ENCODE measurements at regions of chr12 and their contacts with region 1.

Region 1: GRCh38 chr12:95998611-95999286 is 2.6 kb upstream of the HAL start:
- DNase-seq: peak; percentile 67
- ATAC-seq: peak; percentile 97
- H3K4me3 Mint-ChIP-seq: no peak overlapping the region
- H3K27ac Mint-ChIP-seq: no peak overlapping the region
- H3K4me1 Mint-ChIP-seq: peaks cover 3% of the 10 kb centered on the region
- H3K27me3 Mint-ChIP-seq: no peaks in the 10 kb centered on the region
- CTCF ChIP-seq: peak; percentile 71

Region 2: DNA sequence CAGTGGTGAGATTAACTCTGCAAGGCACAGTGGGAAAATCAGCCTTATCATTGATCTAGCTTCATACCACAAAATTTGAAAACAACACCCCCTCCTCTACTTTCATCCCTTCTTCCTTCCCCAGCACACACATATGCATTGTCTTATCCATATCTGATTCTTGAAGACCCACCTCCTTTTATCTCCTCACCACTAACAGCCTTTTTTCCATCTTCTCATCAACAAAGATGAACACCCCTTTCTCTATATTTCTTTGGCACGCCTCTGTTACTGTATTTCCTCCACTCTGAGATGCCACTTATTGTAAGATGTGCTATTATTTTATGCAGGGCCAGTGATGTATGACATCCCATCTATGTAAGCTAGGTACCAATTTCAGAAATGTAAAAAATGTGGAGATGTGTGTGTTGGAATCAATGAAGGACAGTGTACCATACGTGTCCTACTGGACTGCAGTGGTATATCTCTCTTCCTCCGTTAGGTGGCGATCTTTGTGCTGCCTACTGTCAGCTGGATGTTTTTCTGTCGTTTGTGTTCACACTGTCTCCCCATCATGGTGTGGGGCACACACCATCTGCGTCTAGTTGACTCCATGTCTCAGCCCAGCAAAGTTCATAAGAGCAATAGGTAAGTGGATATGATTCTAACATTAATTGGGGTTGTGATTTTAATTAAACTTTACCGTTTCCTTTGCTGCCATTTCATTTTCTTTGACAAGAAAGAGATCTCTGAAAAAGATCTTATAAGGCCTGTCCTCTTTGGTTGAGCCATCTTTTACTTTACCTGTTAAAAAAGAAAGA is 80.4 kb before region 1 on chr12:
- CTCF ChIA-PET with region 1: interaction called, 85 read pairs
- POLR2A ChIA-PET with region 1: interaction called, 4 read pairs
- intact Hi-C with region 1: loop called (anchors 2 kb)
- DNase-seq: peak; percentile 62
- ATAC-seq: peak; percentile 99
- H3K4me3 Mint-ChIP-seq: no peak overlapping the region
- H3K27ac Mint-ChIP-seq: no peak overlapping the region
- H3K4me1 Mint-ChIP-seq: no peaks in the 10 kb centered on the region
- H3K27me3 Mint-ChIP-seq: peaks cover 2% of the 10 kb centered on the region
- CTCF ChIP-seq: peak; percentile 95

Region 3: DNA sequence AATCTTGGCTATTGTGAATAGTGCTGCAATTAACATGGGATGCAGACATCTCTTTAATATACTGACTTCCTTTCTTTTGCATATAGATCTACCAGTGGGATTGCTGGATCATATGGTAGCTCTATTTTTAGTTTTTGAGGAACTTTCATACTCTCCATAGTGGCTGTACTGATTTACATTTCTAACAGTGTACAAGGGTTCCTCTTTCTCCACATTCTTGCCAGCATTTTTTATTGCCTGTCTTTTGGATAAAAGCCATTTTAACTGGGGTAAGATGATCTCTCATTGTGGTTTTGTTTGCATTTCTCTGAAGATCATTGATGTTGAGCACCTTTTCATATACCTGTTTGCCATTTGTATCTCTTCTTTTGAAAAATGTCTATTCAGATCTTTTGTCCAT is 47.2 kb before region 1 on chr12:
- CTCF ChIA-PET with region 1: interaction called, 13 read pairs
- POLR2A ChIA-PET with region 1: no interaction called
- intact Hi-C with region 1: no loop called
- DNase-seq: no peak
- ATAC-seq: no peak
- H3K4me3 Mint-ChIP-seq: no peak overlapping the region
- H3K27ac Mint-ChIP-seq: no peak overlapping the region
- H3K4me1 Mint-ChIP-seq: no peaks in the 10 kb centered on the region
- H3K27me3 Mint-ChIP-seq: peaks cover 5% of the 10 kb centered on the region
- CTCF ChIP-seq: no peak

Region 4: DNA sequence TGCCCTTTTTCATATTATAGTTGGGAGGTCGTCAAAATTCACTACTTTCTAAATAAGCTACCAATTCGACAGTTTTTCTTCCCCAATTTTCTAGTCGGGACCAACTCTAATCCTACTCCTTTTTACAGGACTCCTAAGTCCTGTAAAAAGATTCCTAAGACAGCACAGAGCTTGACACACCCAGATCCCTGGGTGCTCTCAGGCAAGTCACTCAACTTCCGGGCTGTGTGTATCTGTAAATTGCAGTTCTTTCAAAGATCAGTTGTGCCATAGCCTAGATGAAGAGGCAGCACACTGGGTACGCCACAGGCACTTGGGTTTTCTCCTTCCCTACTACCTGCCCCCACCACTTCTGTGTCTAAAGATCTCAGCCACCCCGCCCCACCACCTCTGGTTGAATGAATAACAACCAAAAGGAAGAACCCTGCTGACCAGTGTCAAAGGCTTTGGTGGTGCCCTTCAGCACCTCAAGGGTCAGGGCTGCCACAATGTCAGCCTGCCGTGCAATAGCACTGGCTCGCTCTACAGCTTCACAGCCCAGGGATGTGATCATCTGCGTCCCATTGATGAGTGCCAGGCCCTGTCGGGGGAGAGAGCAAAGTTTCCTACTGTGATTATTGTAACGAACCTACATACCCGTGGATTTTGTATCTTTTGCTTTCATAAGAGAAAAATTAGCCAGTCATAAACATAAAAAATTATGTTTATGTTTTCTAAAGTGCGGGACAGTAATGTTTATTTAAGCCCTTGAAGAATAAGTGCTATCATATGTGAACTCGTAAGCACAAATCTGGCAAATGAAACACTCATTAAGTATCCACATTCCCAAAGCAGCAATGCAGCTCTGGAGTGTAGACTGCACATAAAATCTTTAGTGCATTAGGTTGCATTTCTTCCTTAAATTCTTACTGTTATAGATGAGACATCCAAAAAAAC is 11.8 kb before region 1 on chr12:
- CTCF ChIA-PET with region 1: interaction called, 27 read pairs
- POLR2A ChIA-PET with region 1: interaction called, 4 read pairs
- intact Hi-C with region 1: no loop called
- DNase-seq: no peak
- ATAC-seq: no peak
- H3K4me3 Mint-ChIP-seq: no peak overlapping the region
- H3K27ac Mint-ChIP-seq: no peak overlapping the region
- H3K4me1 Mint-ChIP-seq: no peaks in the 10 kb centered on the region
- H3K27me3 Mint-ChIP-seq: no peaks in the 10 kb centered on the region
- CTCF ChIP-seq: no peak

Region 5: DNA sequence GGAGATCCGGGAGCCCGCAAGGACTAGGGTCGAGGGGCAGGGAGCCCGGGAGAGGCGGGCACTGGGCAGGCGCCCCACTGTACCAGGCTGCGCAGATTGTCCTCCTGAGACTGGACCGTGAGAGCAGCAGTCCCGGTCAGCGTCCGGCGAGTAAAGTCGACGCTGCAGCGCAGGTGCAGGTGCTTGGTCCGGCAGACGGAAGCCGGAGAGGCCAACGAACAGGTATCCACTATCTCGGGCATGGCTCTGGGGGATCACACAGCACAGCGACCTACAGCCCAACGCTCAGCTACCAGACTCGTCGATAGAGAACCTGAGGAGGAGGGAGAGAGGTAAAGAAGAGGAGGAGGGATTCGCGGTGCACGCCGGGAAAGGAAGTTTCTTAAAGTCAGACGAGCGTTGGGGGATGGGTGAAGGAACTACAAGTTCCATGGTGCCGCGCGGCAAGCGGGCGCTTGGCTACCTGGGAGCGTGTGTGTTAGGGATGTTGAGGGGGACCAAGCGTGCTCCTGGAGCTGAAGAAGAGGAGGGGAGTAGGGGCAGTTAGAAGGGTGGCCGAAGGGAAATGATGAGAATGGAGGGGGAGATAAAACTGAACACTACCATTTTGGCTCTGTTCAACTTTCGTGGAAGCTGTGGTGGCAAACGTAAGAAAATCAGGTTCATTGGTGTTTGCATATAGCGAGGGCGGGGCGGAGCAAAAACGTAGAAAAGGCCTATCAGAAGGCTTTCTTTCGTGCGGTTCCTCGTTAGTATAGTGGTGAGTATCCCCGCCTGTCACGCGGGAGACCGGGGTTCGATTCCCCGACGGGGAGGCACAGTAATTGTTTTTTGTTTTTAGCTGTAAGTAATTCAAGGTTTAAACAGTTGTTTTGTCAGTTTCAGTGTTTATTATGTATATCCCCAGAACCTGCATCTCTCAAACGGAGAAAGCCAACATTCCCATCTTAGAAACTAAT is 36.8 kb after region 1 on chr12 and contains the start of gene LTA4H:
- CTCF ChIA-PET with region 1: interaction called, 15 read pairs
- POLR2A ChIA-PET with region 1: no interaction called
- intact Hi-C with region 1: no loop called
- DNase-seq: peak; percentile 100
- ATAC-seq: peak; percentile 96
- H3K4me3 Mint-ChIP-seq: no peak within 1 kb of the TSS
- H3K27ac Mint-ChIP-seq: no peak within 1 kb of the TSS
- H3K4me1 Mint-ChIP-seq: peaks cover 15% of the 10 kb centered on the region
- H3K27me3 Mint-ChIP-seq: no peaks in the 10 kb centered on the region
- CTCF ChIP-seq: no peak
- total RNA-seq, gene LTA4H: 112 TPM

Measured in activated CD8-positive, alpha-beta T cell treated with anti-CD3 and anti-CD28 coated beads for 36 hours (primary cell).